Psoas muscle (tissue), 8 donors: ENCODE measurements at regions of chr11 and their contacts with region 1.

Region 1: GRCh38 chr11:118145285-118146227 is 7.1 kb downstream of the SCN4B start:
- DNase-seq: peak; percentile 81 to 91
- ATAC-seq: peak; percentile 90 to 96 (median 94)
- H3K4me3 ChIP-seq: peak overlapping the region; percentile 67
- H3K27ac ChIP-seq: peak overlapping the region; percentile 52
- H3K4me1 ChIP-seq: no peaks in the 10 kb centered on the region
- H3K27me3 ChIP-seq: no peaks in the 10 kb centered on the region
- CTCF ChIP-seq: peak; percentile 90

Region 2: GRCh38 chr11:118171269-118172062 is 25.9 kb after region 1 on chr11:
- intact Hi-C with region 1: loop called (anchors 1 kb)
- DNase-seq: peak; percentile 65 to 83
- ATAC-seq: peak; percentile 56 to 81 (median 72)
- H3K4me3 ChIP-seq: peak overlapping the region; percentile 33
- H3K27ac ChIP-seq: no peak overlapping the region
- H3K4me1 ChIP-seq: peaks cover 12% of the 10 kb centered on the region
- H3K27me3 ChIP-seq: no peaks in the 10 kb centered on the region
- CTCF ChIP-seq: peak; percentile 91

Region 3: GRCh38 chr11:118295834-118296454 is 150.4 kb after region 1 on chr11:
- intact Hi-C with region 1: loop called in 1 of 2 experiments (anchors 1 kb)
- DNase-seq: no peak
- ATAC-seq: peak in 1 of 4 donors; percentile 37
- H3K4me3 ChIP-seq: no peak overlapping the region
- H3K27ac ChIP-seq: no peak overlapping the region
- H3K4me1 ChIP-seq: no peaks in the 10 kb centered on the region
- H3K27me3 ChIP-seq: peaks cover 0 to 3% (median 0%) of the 10 kb centered on the region in 3 donors
- CTCF ChIP-seq: peak; percentile 46

Region 4: GRCh38 chr11:118359295-118359958 is 213.9 kb after region 1 on chr11 and contains the start of gene UBE4A:
- intact Hi-C with region 1: loop called (anchors 5 to 10 kb)
- DNase-seq: peak; percentile 96 to 98
- ATAC-seq: peak; percentile 96 to 99 (median 98)
- H3K4me3 ChIP-seq: peak within 1 kb of the TSS; percentile 76
- H3K27ac ChIP-seq: peak within 1 kb of the TSS; percentile 92
- H3K4me1 ChIP-seq: peaks cover 38% of the 10 kb centered on the region
- H3K27me3 ChIP-seq: no peaks in the 10 kb centered on the region
- CTCF ChIP-seq: no peak
- total RNA-seq, gene UBE4A: 21.0 to 42.3 (median 33.0) TPM

Region 5: DNA sequence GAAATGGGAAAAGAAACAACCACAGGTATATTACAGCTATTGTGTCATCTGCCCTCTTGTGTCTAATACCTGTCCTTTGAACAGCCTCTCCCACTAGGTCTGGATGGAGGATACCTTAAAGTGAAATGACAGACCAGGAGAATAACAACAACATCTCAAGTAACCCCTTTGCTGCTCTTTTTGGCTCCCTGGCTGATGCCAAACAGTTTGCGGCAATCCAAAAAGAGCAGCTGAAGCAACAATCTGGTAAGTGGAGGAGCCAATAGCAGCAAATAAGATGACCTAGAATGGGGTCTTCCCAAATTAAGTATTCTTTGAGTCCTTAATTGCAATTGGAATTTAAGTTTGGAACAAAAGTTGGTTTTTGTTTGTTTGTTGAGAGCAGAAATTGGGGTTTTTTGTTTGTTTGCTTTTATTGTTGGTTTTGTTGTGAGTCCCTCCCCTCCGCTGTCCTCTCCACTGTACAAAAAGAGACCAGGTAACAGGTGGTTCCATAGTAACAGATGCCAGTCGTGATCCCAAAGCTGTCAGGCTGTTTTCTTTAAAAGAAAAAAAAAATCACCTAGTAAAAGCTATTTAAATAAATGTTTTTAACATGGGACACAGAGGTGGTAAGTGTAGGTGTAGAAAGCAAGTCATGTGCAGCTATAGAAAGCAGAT is 219.5 kb after region 1 on chr11:
- intact Hi-C with region 1: loop called in 1 of 2 experiments (anchors 5 kb)
- DNase-seq: no peak
- ATAC-seq: peak in 2 of 4 donors; percentile 10 to 24
- H3K4me3 ChIP-seq: peak overlapping the region; percentile 30
- H3K27ac ChIP-seq: peak overlapping the region; percentile 84
- H3K4me1 ChIP-seq: peaks cover 52% of the 10 kb centered on the region
- H3K27me3 ChIP-seq: no peaks in the 10 kb centered on the region
- CTCF ChIP-seq: no peak

Region 6: GRCh38 chr11:118488480-118489109 is 343.0 kb after region 1 on chr11:
- intact Hi-C with region 1: loop called (anchors 2 to 10 kb)
- DNase-seq: peak; percentile 56 to 73
- ATAC-seq: peak; percentile 61 to 89 (median 69)
- H3K4me3 ChIP-seq: no peak overlapping the region
- H3K27ac ChIP-seq: no peak overlapping the region
- H3K4me1 ChIP-seq: no peaks in the 10 kb centered on the region
- H3K27me3 ChIP-seq: no peaks in the 10 kb centered on the region
- CTCF ChIP-seq: peak; percentile 76

Region 7: DNA sequence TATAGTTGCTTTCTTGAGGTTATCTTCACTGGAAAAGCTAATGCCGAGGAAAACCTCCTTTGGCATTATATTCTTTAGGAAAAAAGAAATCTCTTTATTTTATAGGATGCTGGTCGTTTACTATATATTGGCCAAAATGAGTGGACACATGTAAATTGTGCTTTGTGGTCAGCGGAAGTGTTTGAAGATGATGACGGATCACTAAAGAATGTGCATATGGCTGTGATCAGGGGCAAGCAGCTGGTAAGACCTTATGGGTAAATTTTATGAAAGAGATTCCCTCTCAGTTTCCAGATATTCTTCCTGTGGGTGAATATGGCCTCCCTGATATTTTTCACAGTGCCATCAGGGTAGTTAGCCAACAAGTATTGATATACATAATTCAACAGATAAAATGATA is 352.3 kb after region 1 on chr11:
- intact Hi-C with region 1: loop called in 1 of 2 experiments (anchors 10 kb)
- DNase-seq: no peak
- ATAC-seq: no peak
- H3K4me3 ChIP-seq: no peak overlapping the region
- H3K27ac ChIP-seq: no peak overlapping the region
- H3K4me1 ChIP-seq: no peaks in the 10 kb centered on the region
- H3K27me3 ChIP-seq: no peaks in the 10 kb centered on the region
- CTCF ChIP-seq: no peak